ENCODE measurements at regions of chr17 and their contacts with region 1.

Region 1: DNA sequence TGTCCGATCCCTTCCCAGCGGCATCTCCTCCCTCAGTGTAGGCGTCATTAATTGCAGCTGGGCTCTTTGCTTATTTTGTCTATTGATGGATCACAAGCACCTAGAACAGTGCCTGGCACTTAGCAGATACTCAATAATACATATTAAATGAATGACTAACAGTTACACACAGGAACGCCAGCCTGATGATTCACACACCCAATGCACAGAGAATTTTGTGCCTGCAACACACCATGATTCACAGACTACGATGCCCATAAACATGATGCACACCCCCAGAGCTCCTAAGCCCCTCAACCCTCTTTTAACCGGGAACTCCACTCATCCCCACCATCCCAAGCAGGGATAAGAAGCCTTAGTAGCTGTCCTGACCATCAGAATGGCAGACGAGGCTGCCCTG is 66.6 kb upstream of the TMEM97 start:
- DNase-seq: no peak
- H3K4me3 ChIP-seq: no peak overlapping the region
- H3K27me3 ChIP-seq: peaks cover 3% of the 10 kb centered on the region; the same call in 1 of the 2 replicates
- CTCF ChIP-seq: no peak

Region 2: DNA sequence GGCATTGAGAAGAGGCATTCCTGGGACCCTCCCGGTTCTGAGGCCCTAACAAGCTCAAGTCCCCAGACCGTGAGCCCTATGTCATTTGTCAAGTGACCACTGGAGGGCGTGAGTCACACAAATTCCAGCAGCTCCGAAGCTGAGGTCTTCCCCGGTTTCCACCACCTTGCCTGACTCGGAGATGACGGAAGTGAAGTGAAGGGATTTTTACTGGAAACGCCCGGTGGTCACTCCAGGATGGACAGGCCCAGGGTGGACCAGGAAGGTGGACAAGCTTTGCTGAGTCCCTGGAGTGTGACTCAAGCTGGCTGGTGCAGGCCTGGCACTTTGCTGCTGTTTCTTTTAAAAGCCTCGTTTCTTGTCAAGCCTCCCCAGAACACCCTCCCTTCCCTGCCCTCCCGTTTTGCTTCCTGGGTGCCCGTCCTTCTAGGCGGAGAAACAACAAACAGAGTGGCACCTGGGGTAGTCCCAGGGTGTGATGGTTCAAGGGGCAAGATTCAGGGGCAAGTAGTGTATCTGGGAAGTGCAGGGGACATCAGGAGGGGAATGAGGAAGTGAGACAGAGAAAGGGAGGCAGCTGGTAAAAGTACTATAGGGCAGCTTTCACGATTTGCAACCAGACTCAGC is 446.8 kb before region 1 on chr17:
- CTCF ChIA-PET with region 1: interaction called, 25 read pairs
- POLR2A ChIA-PET with region 1: no interaction called
- DNase-seq: peak; percentile 21
- H3K4me3 ChIP-seq: 0 out of 2 replicates have a peak overlapping the region, but pooled peaks have one; percentile 10
- H3K27me3 ChIP-seq: no peaks in the 10 kb centered on the region
- CTCF ChIP-seq: peak; percentile 84

Region 3: DNA sequence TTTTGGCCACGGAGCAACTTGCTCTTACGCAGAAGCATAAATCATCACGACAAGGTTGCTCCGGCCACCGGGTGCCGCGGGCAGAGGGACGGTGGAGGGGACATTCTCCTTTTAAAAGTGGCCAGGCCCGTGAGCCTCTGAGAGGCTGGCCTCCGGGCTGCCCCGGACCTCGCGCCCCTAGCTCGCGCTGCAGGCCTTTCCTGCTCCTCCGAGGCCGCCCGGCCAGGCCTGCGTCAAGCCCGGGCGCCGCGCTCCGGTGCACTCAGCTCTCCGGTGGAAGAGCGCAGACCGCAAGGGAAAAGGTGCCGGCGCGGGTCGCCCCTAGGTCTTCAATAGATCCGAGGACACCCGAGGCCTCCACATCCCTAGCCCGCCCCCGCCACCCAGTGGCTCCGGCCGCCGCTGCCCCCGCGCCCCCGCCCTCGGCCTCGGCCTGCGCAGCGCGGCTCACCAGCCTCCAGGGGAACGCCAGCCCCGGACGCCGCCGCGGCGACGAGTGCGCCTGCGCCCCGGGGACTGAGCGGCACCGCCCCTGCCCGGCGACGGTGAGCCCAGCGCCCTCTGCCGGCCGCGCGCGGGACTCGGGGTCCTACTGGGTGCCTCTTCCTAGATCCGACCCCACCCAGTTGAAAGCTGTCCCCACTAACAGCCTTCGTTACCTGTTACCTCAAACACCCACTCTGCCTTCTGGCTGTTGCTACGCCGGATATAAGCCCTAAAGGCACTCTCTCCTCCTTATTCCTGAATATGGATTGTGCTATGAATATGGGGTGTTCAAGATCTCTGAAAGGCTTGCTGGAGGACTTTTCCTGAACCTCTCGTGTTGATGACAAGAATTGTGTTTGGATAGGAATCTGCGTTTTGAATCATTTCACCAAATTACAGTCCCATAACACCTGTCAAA is 359.3 kb before region 1 on chr17 and contains the start of gene LYRM9:
- CTCF ChIA-PET with region 1: interaction called, 11 read pairs
- POLR2A ChIA-PET with region 1: no interaction called
- DNase-seq: peak; percentile 27
- H3K4me3 ChIP-seq: peak within 1 kb of the TSS; percentile 62
- H3K27me3 ChIP-seq: peaks cover 4% of the 10 kb centered on the region; the same call in 1 of the 2 replicates
- CTCF ChIP-seq: peak; percentile 78
- polyA plus RNA-seq, gene LYRM9: 6.5 and 7.0 TPM in 2 replicates

Region 4: DNA sequence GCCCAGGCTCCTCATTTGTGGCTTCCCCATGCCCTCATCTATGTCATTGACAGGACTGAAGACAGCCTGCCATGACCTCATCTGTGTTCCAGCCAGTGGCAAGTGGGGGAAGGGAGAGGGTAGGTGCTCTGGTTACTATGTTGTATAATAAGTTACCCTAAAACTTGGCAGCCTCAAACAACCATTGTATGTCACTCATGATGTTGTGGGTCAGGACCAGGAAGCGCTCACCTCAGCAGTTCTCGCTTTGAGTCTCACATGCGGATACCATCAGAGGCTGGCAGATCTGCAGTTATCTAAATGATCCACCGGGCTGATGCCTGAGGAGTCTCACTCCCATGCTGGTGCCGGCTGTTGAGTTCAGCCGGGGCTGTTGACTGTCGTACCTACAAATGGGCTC is 22.4 kb before region 1 on chr17:
- CTCF ChIA-PET with region 1: interaction called, 10 read pairs
- POLR2A ChIA-PET with region 1: no interaction called
- DNase-seq: no peak
- H3K4me3 ChIP-seq: no peak overlapping the region
- H3K27me3 ChIP-seq: peaks cover 2% of the 10 kb centered on the region
- CTCF ChIP-seq: no peak

Region 5: GRCh38 chr17:28240991-28241340 is 11.5 kb before region 1 on chr17:
- CTCF ChIA-PET with region 1: interaction called, 24 read pairs
- POLR2A ChIA-PET with region 1: no interaction called
- DNase-seq: no peak
- H3K4me3 ChIP-seq: no peak overlapping the region
- H3K27me3 ChIP-seq: peaks cover 2% of the 10 kb centered on the region
- CTCF ChIP-seq: no peak

Region 6: DNA sequence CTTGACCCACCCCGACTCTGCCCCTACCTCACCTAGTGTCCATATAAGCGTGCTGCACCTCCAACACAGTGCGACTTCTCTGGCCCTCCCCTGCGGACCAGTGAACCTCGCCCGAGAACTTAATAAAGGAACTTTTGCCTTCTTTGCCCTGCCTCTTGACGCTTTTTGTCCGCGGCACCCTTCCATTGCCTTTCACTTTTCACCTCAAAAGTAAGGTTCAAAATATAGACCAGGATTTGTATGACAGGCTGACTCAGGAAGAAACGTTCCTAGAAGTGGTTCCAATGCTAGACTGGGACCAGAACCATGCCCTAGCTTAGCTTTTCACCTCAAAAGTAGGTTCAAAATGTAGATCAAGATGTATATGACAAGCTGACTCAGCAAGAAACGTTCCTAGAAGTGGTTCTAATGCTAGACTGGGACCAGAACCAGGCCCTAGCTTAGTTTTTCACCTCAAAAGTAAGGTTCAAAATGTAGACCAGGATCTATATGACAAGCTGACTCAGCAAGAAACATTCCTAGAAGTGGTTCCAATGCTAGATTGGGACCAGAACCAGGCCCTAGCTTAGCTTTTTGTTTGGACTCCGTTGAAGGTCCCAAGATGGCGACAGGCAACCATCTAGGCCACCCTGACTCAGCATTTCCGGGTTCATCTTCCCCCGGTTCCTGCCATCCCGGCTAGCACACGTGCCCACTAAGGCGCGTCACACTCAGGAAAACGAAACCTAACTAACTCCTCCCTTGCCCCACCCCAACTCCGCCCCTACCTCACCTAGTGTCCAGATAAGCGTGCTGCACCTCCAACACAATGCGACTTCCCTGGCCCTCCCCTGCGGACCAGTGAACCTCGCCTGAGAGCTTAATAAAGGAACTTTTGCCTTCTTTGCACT is 15.5 kb after region 1 on chr17:
- CTCF ChIA-PET with region 1: interaction called, 10 read pairs
- POLR2A ChIA-PET with region 1: no interaction called
- DNase-seq: no peak
- H3K4me3 ChIP-seq: no peak overlapping the region
- H3K27me3 ChIP-seq: no peaks in the 10 kb centered on the region
- CTCF ChIP-seq: no peak

Region 7: DNA sequence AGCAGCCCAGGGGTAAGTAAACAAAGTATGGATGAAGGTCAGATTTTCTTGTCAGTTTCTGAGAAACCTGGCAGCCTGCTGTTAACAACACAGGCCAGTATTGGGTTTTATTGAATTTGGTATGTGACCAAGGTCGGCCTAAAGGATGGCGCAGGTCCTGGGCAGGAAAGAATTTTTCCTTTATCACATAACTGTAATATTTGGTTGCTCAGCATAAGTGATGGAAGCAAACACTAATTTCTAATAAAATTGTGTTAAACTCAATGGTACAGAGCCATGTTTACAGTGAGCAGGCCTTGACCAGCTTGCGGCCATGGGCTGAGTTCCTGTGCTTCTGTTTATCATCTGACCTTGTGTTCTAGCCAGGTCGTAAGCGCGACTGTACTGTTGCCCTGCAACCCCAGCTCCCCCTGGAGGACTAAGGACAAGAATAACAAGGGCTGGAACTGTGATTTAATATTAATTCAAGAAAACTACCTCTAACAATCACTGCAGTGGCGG is 94.4 kb after region 1 on chr17:
- CTCF ChIA-PET with region 1: interaction called, 10 read pairs
- POLR2A ChIA-PET with region 1: no interaction called
- DNase-seq: no peak
- H3K4me3 ChIP-seq: no peak overlapping the region
- H3K27me3 ChIP-seq: no peaks in the 10 kb centered on the region
- CTCF ChIP-seq: peak; percentile 48

Region 8: GRCh38 chr17:28372203-28372954 is 119.9 kb after region 1 on chr17:
- CTCF ChIA-PET with region 1: no interaction called
- POLR2A ChIA-PET with region 1: no interaction called
- DNase-seq: no peak
- H3K4me3 ChIP-seq: peak overlapping the region; percentile 73
- H3K27me3 ChIP-seq: no peaks in the 10 kb centered on the region
- CTCF ChIP-seq: no peak